Posterior vena cava (tissue), 2 donors: ENCODE measurements at regions of chr12 and their contacts with region 1.

Region 1: DNA sequence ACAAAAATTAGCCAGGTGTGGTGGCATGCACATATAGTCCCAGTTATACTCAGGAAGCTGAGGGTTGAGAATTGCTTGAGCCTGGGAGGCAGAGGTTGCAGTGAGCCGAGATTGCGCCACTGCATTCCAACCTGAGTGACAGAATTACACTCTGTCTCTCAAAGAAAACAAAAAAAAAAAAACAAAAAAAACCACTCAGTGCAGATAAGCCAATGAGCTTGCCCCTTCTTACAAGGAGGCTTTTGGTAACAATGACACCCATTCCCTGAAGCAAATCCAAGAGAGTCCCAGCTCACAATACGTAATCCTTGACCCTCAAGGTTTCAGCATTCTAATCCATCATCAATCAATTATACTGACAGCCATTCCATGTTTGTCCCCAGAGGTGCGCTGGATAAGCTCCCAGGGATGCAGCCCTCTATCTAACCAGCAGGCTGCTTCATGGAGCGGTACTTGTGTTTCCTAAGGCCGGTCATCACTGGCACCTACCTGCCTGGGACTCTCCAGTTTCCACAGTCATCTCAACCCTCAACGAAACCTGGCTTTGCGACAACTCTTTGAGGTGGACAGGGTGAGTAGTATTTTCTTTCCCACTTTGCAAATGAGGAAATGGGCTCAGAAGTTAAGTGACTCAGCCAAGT is 12.4 kb downstream of the GCN1 start:
- DNase-seq: no peak

Region 2: DNA sequence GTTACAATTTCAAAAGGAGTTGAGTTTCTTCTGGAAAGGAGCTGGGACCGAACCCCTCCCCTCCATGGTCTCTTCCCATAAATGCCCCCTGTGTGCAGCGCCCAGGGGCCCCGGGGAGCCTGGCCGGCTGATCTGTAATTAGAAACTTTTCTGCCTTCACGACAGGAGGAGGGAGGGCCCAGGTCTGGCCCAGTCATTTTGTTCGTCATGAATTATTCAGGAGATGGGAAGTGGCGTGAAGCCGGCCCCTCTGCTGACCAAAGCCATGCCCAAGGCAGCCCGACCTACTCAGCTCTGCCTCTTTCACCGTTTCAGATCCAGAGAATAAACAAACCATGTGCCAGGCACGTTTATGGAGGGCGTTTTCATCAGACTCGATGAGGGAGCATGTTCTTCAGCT is 220.1 kb after region 1 on chr12:
- intact Hi-C with region 1: no loop called
- DNase-seq: no peak

Region 3: GRCh38 chr12:120514002-120514401 is 331.9 kb after region 1 on chr12:
- intact Hi-C with region 1: loop called in 1 of 2 experiments (anchors 10 kb)
- DNase-seq: no peak